H1 (cell line): ENCODE measurements at regions of chr4 and their contacts with region 1.

Region 1: DNA sequence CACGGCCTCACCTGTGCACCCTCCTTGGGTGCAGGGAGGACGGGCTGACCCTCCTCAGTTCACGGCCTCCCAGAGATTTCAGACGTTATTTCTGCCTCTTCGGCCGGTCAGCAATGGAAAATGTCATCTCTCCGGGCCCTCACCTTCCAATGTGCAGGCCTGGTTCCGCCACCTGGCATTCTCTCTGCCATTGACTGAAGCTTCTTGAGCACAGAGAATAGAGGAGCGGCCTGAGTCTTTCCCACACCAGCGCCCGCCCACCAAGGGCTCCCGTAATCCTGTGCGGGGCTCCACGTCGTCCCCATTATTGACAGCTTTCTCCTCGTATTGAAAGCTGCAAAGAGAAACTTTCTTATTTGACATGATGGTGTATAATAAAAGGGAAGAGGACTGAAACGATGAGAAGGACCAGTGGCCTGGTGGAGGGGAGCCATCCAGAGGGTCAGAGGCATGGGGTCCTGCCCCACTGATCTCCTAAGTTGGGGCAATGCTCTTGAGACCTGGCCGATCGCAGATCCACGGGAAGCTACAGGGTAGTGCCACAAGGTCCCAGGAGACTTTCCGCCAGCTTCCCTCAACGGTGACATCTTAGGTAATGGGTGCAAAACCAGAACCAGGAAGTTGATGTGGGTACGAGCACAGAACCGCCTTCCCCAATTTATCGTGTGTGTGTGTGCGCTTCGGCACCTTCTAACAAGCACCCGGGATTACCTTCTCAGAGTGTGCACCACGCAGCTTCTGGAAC is 20.6 kb downstream of the HTRA3 start:
- DNase-seq: no peak
- H3K4me3 ChIP-seq: no peak overlapping the region
- H3K27ac ChIP-seq: no peak overlapping the region
- H3K4me1 ChIP-seq: no peaks in the 10 kb centered on the region
- H3K27me3 ChIP-seq: no peaks in the 10 kb centered on the region
- CTCF ChIP-seq: no peak
- EP300 ChIP-seq: no peak
- POLR2A ChIP-seq: no peak
- RAD21 ChIP-seq: no peak

Region 2: DNA sequence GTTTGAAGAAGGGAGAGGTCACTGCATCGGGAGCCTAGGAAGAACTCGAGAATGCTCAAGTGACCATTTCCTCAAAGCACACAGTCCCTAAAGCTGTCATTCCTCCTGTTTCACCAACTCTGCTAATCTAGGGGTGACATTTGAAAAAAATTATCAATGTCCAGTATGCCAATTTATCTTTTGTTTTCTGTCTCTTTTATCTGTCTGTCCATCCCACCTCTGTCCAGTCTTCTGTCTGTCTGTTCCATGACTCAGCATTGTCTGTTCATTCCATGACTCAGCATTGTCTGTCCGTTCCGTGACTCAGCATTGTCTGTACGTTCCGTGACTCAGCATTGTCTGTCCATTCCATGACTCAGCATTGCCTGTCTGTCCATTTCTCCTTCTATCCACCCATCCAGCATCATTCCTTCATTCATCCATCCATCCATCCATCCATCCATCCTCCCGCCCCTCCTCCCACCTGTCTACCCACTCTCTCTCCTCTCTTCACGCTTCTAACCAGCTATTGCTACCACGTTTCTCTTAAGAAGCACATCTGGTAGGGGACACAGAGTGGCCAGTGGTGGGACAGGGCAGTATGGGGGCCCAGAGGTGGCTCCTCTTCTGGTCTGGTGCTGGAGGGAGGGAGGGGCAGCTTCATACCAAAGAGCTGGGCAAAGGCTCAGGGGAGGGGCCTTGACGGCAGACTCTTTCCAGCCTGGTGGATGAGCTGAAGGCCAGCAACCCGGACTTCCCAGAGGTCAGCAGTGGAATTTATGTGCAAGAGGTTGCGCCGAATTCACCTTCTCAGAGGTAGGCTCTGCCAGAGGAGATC is 13.6 kb after region 1 on chr4:
- CTCF ChIA-PET with region 1: interaction called, 25 read pairs
- POLR2A ChIA-PET with region 1: interaction called, 3 read pairs
- DNase-seq: peak in 1 of 2 experiments; percentile 32
- H3K4me3 ChIP-seq: no peak overlapping the region
- H3K27ac ChIP-seq: no peak overlapping the region; the same call in 1 of the 2 replicates
- H3K4me1 ChIP-seq: peaks cover 0 to 9% (median 6%) of the 10 kb centered on the region in 4 experiments; a peak in 4 of 7 replicates
- H3K27me3 ChIP-seq: peaks cover 0 to 4% (median 0%) of the 10 kb centered on the region in 4 experiments; a peak in 2 of 7 replicates
- CTCF ChIP-seq: no peak
- EP300 ChIP-seq: no peak
- POLR2A ChIP-seq: no peak
- RAD21 ChIP-seq: no peak